Prostate gland (tissue), 2 donors: ENCODE measurements at regions of chr2 and their contacts with region 1.

Region 1: GRCh38 chr2:173027181-173028128 is 48.2 kb upstream of the MAP3K20 start:
- DNase-seq: peak; percentile 93
- H3K4me3 ChIP-seq: no peak overlapping the region
- H3K27ac ChIP-seq: peak overlapping the region; percentile 38 to 41
- H3K4me1 ChIP-seq: no peaks in the 10 kb centered on the region
- H3K27me3 ChIP-seq: no peaks in the 10 kb centered on the region
- CTCF ChIP-seq: peak; percentile 95 to 97 (median 95)
- POLR2A ChIP-seq: no peak

Region 2: DNA sequence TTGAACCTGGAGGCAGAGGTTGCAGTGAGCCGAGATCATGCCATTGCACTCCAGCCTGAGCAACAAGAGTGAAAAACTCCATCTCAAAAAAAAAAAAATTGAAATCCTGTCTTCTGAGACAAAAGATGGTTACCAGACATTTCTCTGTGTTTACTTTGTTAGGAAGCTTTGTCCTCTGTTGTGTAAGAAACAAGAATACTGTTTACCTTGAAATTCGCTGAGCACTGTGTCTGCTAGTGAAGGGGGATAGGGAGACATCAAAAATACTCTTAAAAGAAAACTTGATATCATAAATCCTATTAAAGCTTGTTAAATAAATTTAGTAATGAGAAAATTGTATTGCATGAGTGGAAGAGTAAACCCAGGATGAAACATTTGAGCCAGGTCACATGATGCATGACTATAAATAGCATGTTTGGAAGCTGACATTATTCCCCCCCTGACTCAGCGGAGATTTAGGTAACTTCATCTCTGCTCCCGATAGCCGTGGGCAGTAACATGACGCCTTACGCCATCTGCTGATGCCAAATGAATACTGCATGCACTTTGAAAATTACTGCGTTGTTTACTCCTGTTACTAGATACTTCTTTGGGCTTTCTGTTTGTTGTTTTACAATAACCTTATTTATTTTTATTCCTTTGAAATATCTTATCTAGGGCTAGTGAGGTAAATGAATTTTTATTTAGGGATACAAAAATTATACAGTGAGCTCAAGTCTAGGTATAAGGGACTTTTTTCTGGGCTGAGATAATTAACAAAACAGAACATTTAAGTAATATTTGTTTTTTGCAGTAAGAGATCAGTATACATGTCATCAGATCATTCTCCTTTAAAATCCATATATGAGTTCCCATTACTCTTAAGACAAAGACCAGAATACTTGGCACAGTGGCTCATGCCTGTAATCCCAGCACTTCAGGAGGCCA is 183.1 kb after region 1 on chr2:
- intact Hi-C with region 1: loop called (anchors 1 kb)
- DNase-seq: peak; percentile 83
- H3K4me3 ChIP-seq: no peak overlapping the region
- H3K27ac ChIP-seq: peak overlapping the region; percentile 50 to 66
- H3K4me1 ChIP-seq: no peaks in the 10 kb centered on the region
- H3K27me3 ChIP-seq: no peaks in the 10 kb centered on the region
- CTCF ChIP-seq: peak; percentile 83 to 92 (median 90)
- POLR2A ChIP-seq: no peak

Region 3: DNA sequence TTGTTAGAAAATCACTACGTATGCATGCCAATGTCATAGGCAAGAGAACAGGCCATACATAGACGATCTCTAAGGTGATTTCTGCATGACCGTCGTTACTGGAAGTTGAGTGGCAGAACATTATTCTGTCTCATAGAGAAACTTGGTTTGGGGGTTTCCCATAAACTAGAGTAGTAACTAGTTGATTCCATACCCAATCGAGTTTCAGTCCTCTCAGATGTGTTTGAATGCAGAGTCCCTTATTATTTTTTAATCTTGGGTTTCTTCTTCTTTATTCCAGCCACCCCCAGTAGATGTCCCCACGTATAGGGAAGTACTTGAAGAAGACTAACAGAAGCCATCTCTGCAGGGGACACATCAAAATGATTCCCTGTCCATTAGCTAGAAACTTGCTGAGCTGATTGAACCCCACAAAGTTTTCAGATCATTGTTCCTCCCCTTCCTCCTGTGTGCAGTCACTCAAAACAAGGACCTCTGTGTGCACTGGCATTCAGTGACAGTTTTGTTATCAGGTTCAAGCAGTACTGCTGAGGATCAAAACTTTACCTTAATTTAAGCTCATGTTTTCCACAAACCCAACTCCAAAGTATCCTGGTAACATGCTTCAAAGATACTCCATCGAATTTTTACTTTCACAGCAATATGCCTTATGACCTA is 258.8 kb after region 1 on chr2:
- intact Hi-C with region 1: loop called (anchors 5 kb)
- DNase-seq: no peak
- H3K4me3 ChIP-seq: no peak overlapping the region
- H3K27ac ChIP-seq: no peak overlapping the region
- H3K4me1 ChIP-seq: no peaks in the 10 kb centered on the region
- H3K27me3 ChIP-seq: no peaks in the 10 kb centered on the region
- CTCF ChIP-seq: no peak
- POLR2A ChIP-seq: no peak